PC-9 (cell line): ENCODE measurements at regions of chr1 and their contacts with region 1.

Region 1: GRCh38 chr1:207963427-207964194 is 52.7 kb upstream of the CD34 start:
- DNase-seq: peak; percentile 62 to 92
- H3K4me3 ChIP-seq: peak overlapping the region; percentile 49; the same call in 1 of the 2 replicates
- H3K27ac ChIP-seq: no peak overlapping the region
- H3K4me1 ChIP-seq: peaks cover 4% of the 10 kb centered on the region
- H3K27me3 ChIP-seq: 0 out of 2 replicates have a peak, but pooled peaks cover 8% of the 10 kb centered on the region
- CTCF ChIP-seq: peak; percentile 92

Region 2: GRCh38 chr1:207828485-207829158 is 135.0 kb before region 1 on chr1:
- CTCF ChIA-PET with region 1: interaction called, 13 read pairs
- POLR2A ChIA-PET with region 1: no interaction called
- intact Hi-C with region 1: loop called (anchors 1 kb)
- DNase-seq: peak; percentile 56 to 66
- H3K4me3 ChIP-seq: no peak overlapping the region
- H3K27ac ChIP-seq: no peak overlapping the region
- H3K4me1 ChIP-seq: peaks cover 35% of the 10 kb centered on the region
- H3K27me3 ChIP-seq: no peaks in the 10 kb centered on the region
- CTCF ChIP-seq: peak; percentile 79

Region 3: GRCh38 chr1:207868774-207869721 is 94.6 kb before region 1 on chr1:
- CTCF ChIA-PET with region 1: interaction called, 17 read pairs
- POLR2A ChIA-PET with region 1: no interaction called
- intact Hi-C with region 1: no loop called
- DNase-seq: peak in 1 of 2 experiments; percentile 80
- H3K4me3 ChIP-seq: peak overlapping the region; percentile 66; the same call in 1 of the 2 replicates
- H3K27ac ChIP-seq: no peak overlapping the region
- H3K4me1 ChIP-seq: peaks cover 28% of the 10 kb centered on the region
- H3K27me3 ChIP-seq: no peaks in the 10 kb centered on the region
- CTCF ChIP-seq: peak; percentile 56

Region 4: DNA sequence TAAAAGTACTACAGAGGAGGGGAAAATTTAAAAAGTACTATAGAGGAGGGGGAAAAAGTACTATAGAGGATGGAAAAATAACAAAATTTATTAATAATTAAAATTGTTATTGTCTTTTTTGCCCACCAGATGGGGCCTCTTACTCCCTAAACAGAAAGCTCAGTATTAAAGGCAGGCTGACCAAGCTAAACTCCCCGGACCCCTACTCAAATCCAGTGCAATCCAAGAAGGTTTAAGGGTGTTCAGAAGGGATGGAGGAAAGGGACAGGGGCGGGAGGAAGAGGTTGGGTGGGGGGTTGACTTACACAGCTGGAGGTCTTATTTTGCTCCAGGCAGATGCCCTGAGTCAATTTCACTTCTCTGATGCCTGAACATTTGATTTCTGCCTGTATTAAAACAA is 66.4 kb before region 1 on chr1:
- CTCF ChIA-PET with region 1: interaction called, 19 read pairs
- POLR2A ChIA-PET with region 1: no interaction called
- intact Hi-C with region 1: no loop called
- DNase-seq: no peak
- H3K4me3 ChIP-seq: no peak overlapping the region
- H3K27ac ChIP-seq: no peak overlapping the region
- H3K4me1 ChIP-seq: no peaks in the 10 kb centered on the region
- H3K27me3 ChIP-seq: peaks cover 4% of the 10 kb centered on the region; the same call in 1 of the 2 replicates
- CTCF ChIP-seq: peak; percentile 65

Region 5: GRCh38 chr1:207910591-207911354 is 52.8 kb before region 1 on chr1 and contains the start of gene CD34:
- CTCF ChIA-PET with region 1: no interaction called
- POLR2A ChIA-PET with region 1: no interaction called
- intact Hi-C with region 1: no loop called
- DNase-seq: no peak
- H3K4me3 ChIP-seq: no peak within 1 kb of the TSS
- H3K27ac ChIP-seq: no peak within 1 kb of the TSS
- H3K4me1 ChIP-seq: no peaks in the 10 kb centered on the region
- H3K27me3 ChIP-seq: peaks cover 5% of the 10 kb centered on the region
- CTCF ChIP-seq: no peak
- total RNA-seq, gene CD34: not detected in 2 replicates

Region 6: DNA sequence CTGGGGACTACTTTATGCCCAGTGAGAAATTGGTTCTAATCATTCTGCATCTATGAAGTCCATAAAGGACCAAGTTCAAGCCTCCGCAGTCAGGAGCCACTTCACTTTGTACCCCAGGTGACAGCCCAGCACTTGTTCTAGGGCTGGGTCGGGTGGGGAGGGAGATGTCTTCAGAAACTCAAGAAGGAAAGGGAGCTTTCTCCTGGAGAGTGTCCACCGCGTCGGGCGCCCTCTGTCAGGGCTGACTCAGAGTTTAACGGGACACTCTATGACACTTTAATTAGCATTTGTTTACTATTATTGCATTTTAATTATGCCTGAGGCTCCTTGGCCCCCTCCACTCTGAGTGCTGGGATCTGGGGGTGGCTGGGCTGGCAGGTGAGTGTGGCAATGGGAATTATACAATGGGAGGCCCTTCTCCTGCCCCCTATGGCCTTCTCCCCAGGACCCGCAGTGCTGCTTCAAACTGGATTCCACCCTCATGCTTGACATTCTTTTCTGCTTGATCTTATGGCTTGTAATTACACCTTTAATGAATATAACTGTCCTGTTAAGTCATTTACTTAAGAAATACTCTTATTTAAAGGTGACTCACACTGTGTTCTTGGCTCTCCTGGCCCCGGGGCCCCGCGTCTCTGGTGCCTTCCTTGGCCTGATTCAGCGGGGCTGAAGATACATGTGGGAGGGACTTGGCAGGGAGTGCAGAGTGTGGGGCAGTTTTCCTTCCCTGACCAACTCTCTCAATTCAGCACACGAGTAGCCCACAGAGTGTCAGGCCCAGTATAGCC is 144.0 kb after region 1 on chr1:
- CTCF ChIA-PET with region 1: no interaction called
- POLR2A ChIA-PET with region 1: no interaction called
- intact Hi-C with region 1: no loop called
- DNase-seq: peak; percentile 81 to 96
- H3K4me3 ChIP-seq: no peak overlapping the region
- H3K27ac ChIP-seq: peak overlapping the region; percentile 73
- H3K4me1 ChIP-seq: peaks cover 66% of the 10 kb centered on the region
- H3K27me3 ChIP-seq: no peaks in the 10 kb centered on the region
- CTCF ChIP-seq: no peak; the same call in 1 of the 2 replicates

Region 7: DNA sequence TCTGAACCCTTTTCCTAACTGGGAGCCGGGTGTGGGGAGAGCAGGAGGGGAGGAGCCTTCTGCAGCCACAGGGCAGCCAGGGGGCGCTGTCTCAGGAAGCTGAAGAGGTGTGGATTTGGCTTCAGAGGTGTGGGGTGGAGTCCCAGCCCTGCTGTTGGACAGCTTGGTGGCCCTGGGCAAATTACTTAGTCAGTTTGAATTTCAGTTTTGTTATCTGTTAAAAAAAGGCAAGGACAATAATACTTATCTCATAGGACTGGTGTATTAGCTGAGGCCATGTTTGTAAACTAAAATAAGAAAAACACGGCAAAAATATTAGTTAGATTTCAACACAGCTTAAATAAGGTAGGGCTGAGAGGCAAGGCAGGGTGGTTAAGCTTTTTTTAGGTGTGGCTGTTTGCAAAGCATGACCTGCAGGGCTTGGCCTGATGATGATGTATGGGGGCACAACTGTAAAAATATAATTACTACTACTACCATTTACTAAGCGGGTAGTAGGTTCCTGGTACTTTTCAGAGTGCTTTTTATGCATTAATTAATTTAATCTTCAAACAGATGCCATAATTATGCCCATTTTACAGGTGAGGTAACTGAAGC is 168.8 kb after region 1 on chr1:
- CTCF ChIA-PET with region 1: interaction called, 16 read pairs
- POLR2A ChIA-PET with region 1: no interaction called
- intact Hi-C with region 1: no loop called
- DNase-seq: peak; percentile 75 to 90
- H3K4me3 ChIP-seq: peak overlapping the region; percentile 9; the same call in 1 of the 2 replicates
- H3K27ac ChIP-seq: peak overlapping the region; percentile 49
- H3K4me1 ChIP-seq: peaks cover 42% of the 10 kb centered on the region
- H3K27me3 ChIP-seq: no peaks in the 10 kb centered on the region
- CTCF ChIP-seq: peak; percentile 98

Region 8: GRCh38 chr1:208264469-208265121 is 301.0 kb after region 1 on chr1:
- CTCF ChIA-PET with region 1: interaction called, 10 read pairs
- POLR2A ChIA-PET with region 1: no interaction called
- intact Hi-C with region 1: no loop called
- DNase-seq: no peak
- H3K4me3 ChIP-seq: no peak overlapping the region
- H3K27ac ChIP-seq: no peak overlapping the region
- H3K4me1 ChIP-seq: no peaks in the 10 kb centered on the region
- H3K27me3 ChIP-seq: peaks cover 92% of the 10 kb centered on the region
- CTCF ChIP-seq: no peak